Activated T-helper 2 cell treated with anti-CD3 and anti-CD28 coated beads, Interferon-gamma antibody, Interleukin-2, Interleukin-4, amounts not matched to agents 10 μg/mL and 5 μg/mL and 100 μg/mL, durations not matched to agents 14 hours and 24 hours and 36 hours (primary cell): ENCODE measurements at regions of chr3 and their contacts with region 1.

Region 1: GRCh38 chr3:128153156-128154041 is at the start of gene EEFSEC:
- DNase-seq: peak; percentile 82
- H3K4me3 Mint-ChIP-seq: peak within 1 kb of the TSS; percentile 83
- H3K27ac Mint-ChIP-seq: peak within 1 kb of the TSS; percentile 91
- H3K4me1 Mint-ChIP-seq: peaks cover 17% of the 10 kb centered on the region
- H3K27me3 Mint-ChIP-seq: no peaks in the 10 kb centered on the region
- total RNA-seq, gene EEFSEC: 22.0 and 23.8 TPM in 2 replicates

Region 2: DNA sequence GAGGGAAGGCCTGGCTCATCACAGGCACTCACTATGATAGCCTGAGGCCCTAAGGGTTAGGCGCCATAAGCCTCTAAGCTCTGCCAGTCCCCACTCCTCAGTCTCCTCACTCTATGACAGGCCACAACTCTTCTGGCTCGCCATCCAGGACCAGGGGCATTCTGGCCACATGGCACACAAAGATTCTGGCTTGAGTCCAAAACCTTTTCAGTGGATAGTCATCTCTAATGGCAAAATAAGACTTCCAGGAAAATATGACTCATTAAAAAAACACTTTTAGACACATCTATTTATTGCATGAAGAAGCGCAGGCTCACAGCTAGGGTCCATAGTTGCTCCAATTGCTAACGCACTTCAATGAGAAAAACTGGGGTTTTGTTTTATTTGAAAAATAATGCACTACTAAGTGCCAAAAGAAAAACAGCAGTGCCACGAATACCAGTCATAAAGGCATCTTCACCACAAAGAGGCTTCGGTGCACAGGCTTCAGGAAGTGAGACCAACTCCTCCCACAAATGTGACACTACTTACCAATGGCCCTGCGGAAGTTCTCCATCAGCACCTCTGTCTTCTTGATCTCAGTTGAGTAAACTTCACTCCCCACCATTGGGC is 40.9 kb before region 1 on chr3:
- intact Hi-C with region 1: loop called (anchors 5 kb)
- DNase-seq: peak; percentile 32
- H3K4me3 Mint-ChIP-seq: peak overlapping the region; percentile 51
- H3K27ac Mint-ChIP-seq: peak overlapping the region; percentile 93
- H3K4me1 Mint-ChIP-seq: peaks cover 40% of the 10 kb centered on the region
- H3K27me3 Mint-ChIP-seq: no peaks in the 10 kb centered on the region

Region 3: DNA sequence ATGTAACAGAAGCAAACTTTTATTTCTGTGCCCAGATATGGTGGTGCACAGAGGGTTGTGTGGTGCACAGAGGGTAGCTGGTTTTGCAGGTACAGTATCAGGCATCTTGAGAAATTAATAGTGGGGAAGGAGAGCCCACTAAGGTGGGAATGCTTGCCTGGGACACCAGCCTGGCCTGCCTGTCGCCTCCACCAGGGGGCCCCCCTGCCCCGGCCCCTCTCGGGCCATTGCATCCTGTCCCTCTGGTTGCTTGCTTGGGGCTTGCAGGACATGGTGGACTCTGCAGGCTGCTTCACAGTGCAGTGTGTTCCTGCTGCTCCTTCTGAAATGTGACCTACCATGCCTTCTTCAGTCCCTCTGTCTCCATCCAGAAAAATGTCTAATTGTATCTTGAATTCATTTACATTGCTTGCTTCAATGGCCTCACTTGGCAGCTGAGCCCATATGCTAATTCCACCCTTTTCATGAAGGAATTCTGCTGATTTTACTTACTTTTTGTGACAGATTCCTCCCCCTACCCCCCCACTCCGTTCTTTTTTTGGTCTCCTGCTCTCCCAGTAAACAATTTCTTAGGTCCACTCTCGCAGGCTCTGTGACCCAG is 73.5 kb after region 1 on chr3:
- intact Hi-C with region 1: no loop called
- DNase-seq: no peak
- H3K4me3 Mint-ChIP-seq: no peak overlapping the region
- H3K27ac Mint-ChIP-seq: no peak overlapping the region
- H3K4me1 Mint-ChIP-seq: no peaks in the 10 kb centered on the region
- H3K27me3 Mint-ChIP-seq: no peaks in the 10 kb centered on the region